Heart left ventricle (tissue), 16 donors: ENCODE measurements at regions of chr22 and their contacts with region 1.

Region 1: GRCh38 chr22:27905653-27906052 is 13.4 kb downstream of the PITPNB start:
- DNase-seq: no peak
- ATAC-seq: no peak
- H3K4me3 ChIP-seq: no peak overlapping the region
- H3K27ac ChIP-seq: no peak overlapping the region
- H3K4me1 ChIP-seq: peaks cover 0 to 26% (median 2%) of the 10 kb centered on the region in 12 donors
- H3K27me3 ChIP-seq: no peaks in the 10 kb centered on the region
- CTCF ChIP-seq: no peak
- POLR2A ChIP-seq: no peak

Region 2: GRCh38 chr22:27949421-27949820 is 43.8 kb after region 1 on chr22:
- intact Hi-C with region 1: no loop called
- DNase-seq: no peak
- ATAC-seq: no peak
- H3K4me3 ChIP-seq: no peak overlapping the region
- H3K27ac ChIP-seq: no peak overlapping the region
- H3K4me1 ChIP-seq: peaks cover 0 to 14% (median 0%) of the 10 kb centered on the region in 12 donors
- H3K27me3 ChIP-seq: no peaks in the 10 kb centered on the region
- CTCF ChIP-seq: no peak
- POLR2A ChIP-seq: no peak

Region 3: DNA sequence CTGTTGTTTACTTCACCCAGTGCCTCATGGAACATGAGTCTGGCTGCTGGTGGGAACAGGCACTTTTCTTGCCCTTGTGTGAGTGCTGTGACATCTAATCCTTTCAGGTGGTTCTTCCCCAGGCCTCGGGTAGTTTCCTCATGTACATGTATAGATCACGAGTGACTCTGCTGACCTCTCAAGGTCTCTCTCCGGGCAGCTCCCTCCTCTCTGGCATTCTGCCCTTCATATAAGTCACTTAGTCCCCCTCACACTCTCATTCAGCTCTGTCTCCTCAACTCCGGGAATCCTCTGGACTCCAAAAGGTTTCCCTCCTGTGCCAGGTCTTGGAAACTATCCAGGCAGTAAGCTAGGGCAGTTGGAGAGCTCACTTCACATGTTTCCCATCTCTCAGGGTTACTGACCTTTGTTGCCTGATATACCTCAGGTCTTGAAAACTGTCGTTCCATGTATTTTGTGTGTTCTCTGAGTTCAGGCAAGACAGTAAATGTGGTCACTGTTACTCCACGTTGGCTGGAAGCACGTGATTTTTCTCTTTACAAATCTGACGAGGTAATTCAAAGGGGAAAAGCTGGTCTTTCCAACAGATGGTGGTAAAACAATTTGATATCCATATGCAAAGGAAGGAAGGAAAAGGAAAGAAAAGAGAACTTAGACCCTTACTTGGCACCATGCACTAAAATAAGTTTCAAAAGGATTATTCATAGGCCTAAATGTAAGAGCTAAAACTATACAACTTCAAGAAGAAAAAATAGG is 53.9 kb after region 1 on chr22:
- intact Hi-C with region 1: loop called in 1 of 10 experiments (anchors 5 kb)
- DNase-seq: no peak
- ATAC-seq: peak; percentile 50 to 69 (median 58)
- H3K4me3 ChIP-seq: no peak overlapping the region
- H3K27ac ChIP-seq: peak overlapping the region in 8 of 12 donors; percentile 7 to 66 (median 30)
- H3K4me1 ChIP-seq: peaks cover 0 to 27% (median 16%) of the 10 kb centered on the region in 12 donors
- H3K27me3 ChIP-seq: no peaks in the 10 kb centered on the region
- CTCF ChIP-seq: no peak
- POLR2A ChIP-seq: no peak